ENCODE measurements at regions of chr6 and their contacts with region 1.

Region 1: GRCh38 chr6:27601668-27602254 is 128.9 kb upstream of the ZNF184 start:
- DNase-seq: no peak
- H3K4me3 ChIP-seq: no peak overlapping the region
- H3K27ac ChIP-seq: no peak overlapping the region
- H3K4me1 ChIP-seq: no peaks in the 10 kb centered on the region
- H3K27me3 ChIP-seq: peaks cover 36% of the 10 kb centered on the region
- CTCF ChIP-seq: no peak

Region 2: GRCh38 chr6:27168586-27169443 is 432.9 kb before region 1 on chr6:
- intact Hi-C with region 1: no loop called
- DNase-seq: peak in 1 of 5 donors; percentile 42
- H3K4me3 ChIP-seq: no peak overlapping the region
- H3K27ac ChIP-seq: no peak overlapping the region
- H3K4me1 ChIP-seq: no peaks in the 10 kb centered on the region
- H3K27me3 ChIP-seq: no peaks in the 10 kb centered on the region
- CTCF ChIP-seq: no peak

Region 3: GRCh38 chr6:27205375-27206278 is 396.1 kb before region 1 on chr6:
- intact Hi-C with region 1: loop called (anchors 5 kb)
- DNase-seq: peak in 2 of 5 donors; percentile 15 to 27
- H3K4me3 ChIP-seq: no peak overlapping the region
- H3K27ac ChIP-seq: no peak overlapping the region
- H3K4me1 ChIP-seq: no peaks in the 10 kb centered on the region
- H3K27me3 ChIP-seq: peaks cover 17% of the 10 kb centered on the region
- CTCF ChIP-seq: no peak